Ovary (tissue), 10 donors: ENCODE measurements at regions of chr14 and their contacts with region 1.

Region 1: GRCh38 chr14:60091550-60092530 is at the start of gene PCNX4:
- DNase-seq: peak; percentile 96 to 98 (median 97)
- H3K4me3 ChIP-seq: peak within 1 kb of the TSS; percentile 89
- H3K27ac ChIP-seq: peak within 1 kb of the TSS; percentile 76 to 98
- H3K4me1 ChIP-seq: peaks cover 8% of the 10 kb centered on the region
- H3K27me3 ChIP-seq: no peaks in the 10 kb centered on the region
- CTCF ChIP-seq: peak in 1 of 3 donors; percentile 20
- EP300 ChIP-seq: peak; percentile 30
- POLR2A ChIP-seq: peak; percentile 79
- total RNA-seq, gene PCNX4: 43.6 to 83.4 (median 60.8) TPM

Region 2: DNA sequence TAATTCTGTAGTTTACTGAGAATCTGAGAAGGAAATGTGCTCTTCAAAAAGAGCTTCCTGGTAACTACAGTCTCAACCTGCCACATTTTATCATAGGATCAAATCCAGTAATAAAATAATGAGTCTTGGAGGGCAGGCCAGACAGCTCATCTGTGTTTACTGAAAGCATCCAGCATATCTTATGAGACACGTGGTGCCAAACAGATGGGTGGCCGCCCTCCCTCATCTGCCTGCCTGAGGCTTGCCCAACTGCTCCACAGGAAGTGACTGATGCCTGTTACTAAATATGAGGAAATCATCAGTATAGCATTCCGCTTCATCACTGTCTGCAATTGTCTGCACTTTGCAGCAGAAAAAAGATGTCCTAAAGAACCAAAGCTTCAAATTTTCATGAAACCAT is 59.9 kb after region 1 on chr14:
- intact Hi-C with region 1: loop called in 1 of 4 experiments (anchors 5 kb)
- DNase-seq: peak in 3 of 5 donors; percentile 29 to 49 (median 44)
- H3K4me3 ChIP-seq: no peak overlapping the region
- H3K27ac ChIP-seq: no peak overlapping the region
- H3K4me1 ChIP-seq: peaks cover 1% of the 10 kb centered on the region
- H3K27me3 ChIP-seq: no peaks in the 10 kb centered on the region
- CTCF ChIP-seq: no peak
- EP300 ChIP-seq: no peak
- POLR2A ChIP-seq: no peak

Region 3: DNA sequence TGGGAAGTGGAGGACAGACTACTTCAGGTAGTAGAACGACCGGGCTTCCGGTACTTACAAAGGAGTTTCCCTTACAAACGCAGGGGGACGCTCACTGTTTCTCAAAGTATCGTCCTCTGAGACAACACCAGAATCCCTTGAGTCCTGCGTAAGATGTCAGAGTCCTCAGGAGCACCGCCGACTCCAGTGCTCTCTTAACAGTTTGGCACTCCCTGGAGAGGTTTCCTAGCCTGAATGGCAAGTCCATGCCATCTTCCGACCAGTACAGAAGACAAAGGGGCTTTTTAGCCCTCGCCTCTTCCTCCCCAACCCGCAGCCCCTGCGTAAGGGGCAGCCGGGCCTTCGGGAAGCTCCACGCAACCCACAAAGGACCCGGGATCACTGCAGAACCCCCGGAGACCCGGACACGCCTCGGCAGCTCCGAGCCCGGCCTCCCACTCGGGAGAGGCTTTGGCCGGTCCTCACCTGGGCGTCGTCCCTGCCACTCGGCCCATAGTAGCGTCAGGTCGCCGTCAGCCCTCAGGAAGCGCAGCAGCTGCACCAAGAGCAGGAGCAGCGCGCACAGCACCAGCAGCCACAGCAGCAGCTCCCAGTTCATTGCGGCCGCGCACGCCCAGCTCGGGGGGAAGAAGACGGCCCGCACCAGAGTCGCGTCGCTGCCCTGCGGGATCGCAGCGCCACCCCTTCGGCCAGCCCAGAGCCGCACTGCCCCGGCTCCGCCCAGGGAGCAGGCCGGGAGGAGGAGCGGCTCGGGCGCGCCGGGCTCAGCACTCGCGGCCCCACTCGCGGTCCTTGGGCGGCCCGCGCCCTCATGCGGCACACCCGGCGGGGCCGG is 73.1 kb after region 1 on chr14 and contains the start of gene DHRS7:
- intact Hi-C with region 1: loop called in 2 of 4 experiments (anchors 5 kb)
- DNase-seq: peak; percentile 75 to 88 (median 82)
- H3K4me3 ChIP-seq: peak within 1 kb of the TSS; percentile 71
- H3K27ac ChIP-seq: peak within 1 kb of the TSS; percentile 80 to 88
- H3K4me1 ChIP-seq: peaks cover 9% of the 10 kb centered on the region
- H3K27me3 ChIP-seq: no peaks in the 10 kb centered on the region
- CTCF ChIP-seq: peak in 2 of 3 donors; percentile 28 to 39
- EP300 ChIP-seq: no peak
- POLR2A ChIP-seq: peak; percentile 56
- total RNA-seq, gene DHRS7: 57.5 to 71.6 (median 59.7) TPM

Region 4: GRCh38 chr14:60248697-60249318 is 157.0 kb after region 1 on chr14 and contains the start of gene PPM1A:
- intact Hi-C with region 1: loop called in 1 of 4 experiments (anchors 5 kb)
- DNase-seq: peak; percentile 96 to 98 (median 97)
- H3K4me3 ChIP-seq: peak within 1 kb of the TSS; percentile 91
- H3K27ac ChIP-seq: peak within 1 kb of the TSS; percentile 97 to 99
- H3K4me1 ChIP-seq: peaks cover 4% of the 10 kb centered on the region
- H3K27me3 ChIP-seq: no peaks in the 10 kb centered on the region
- CTCF ChIP-seq: peak in 1 of 3 donors; percentile 7
- EP300 ChIP-seq: peak; percentile 65
- POLR2A ChIP-seq: peak; percentile 96
- total RNA-seq, gene PPM1A: 24.4 to 44.7 (median 43.2) TPM